ENCODE measurements at regions of chr4 and their contacts with region 1.

Region 1: DNA sequence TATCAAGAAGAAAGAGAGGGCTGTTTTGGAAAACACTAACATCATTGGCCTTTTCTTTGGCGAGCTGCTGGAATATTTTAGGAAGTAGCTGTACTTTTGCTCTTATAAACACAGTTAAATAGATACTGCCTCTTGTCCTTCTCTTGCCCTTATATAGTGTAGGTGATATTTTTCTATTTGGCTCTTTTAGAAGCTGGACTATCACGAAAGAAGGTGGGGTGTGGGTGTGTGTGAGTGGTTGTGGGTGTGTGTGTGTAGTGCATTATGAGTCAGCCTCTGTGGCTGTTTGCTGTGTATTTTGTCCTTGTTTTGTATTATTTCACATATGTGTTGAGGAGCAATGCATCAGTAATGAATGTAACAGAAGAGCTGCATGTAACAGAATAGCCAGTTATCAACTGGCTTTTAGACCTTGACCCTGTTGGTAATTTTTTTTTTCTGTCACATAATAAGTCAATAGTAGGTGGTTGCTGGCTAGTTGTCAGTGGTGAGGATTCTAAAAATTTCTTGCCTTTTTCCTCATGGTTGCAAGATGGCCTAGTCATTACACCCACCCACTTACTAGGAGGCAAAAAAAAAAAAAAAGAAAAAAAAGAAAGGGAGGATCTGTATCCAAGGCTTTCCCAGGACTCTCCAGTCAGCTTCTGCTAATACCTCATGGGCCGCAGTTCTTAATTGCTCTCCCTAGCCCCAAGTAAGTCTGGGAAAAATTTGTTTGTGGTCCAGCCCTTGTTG is 23.8 kb downstream of the ARHGAP10 start:
- DNase-seq: no peak
- ATAC-seq: peak; percentile 61
- H3K4me3 ChIP-seq: no peak overlapping the region
- H3K27ac ChIP-seq: peak overlapping the region; percentile 5 to 88
- H3K4me1 ChIP-seq: peaks cover 5 to 7% of the 10 kb centered on the region in 2 donors
- H3K27me3 ChIP-seq: no peaks in the 10 kb centered on the region

Region 2: DNA sequence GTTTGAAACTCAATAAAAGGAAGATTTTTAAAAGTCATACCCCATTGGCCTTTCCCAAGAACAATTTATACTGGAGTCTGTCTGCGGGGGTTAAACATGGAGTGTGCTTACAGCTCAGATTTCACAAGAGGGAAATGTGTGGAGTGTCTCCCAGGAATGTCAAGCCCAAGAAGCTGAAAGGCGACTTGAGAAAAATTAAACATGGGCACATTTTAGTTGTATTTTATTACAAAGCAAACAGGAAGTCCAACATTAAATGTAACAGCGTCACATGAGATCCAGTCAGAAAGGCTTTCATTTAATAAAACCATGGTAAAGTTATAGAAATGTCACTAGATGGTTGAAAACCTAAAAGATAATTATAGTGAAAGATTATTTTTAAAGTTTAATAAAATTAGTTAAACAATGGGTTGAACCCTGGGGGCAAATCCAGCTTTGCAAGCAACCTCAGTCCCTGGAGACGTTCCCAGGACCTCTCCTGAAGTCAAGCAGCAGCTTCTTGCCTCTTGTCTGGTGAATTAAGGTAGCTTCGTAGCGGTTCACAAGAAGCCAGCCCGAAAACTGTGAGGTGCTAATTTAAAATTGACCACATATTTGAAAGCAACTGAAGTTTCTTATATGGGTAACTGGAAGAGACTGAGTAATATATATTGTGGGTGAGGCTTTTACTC is 443.2 kb before region 1 on chr4:
- intact Hi-C with region 1: no loop called
- DNase-seq: no peak
- ATAC-seq: peak; percentile 50
- H3K4me3 ChIP-seq: no peak overlapping the region
- H3K27ac ChIP-seq: no peak overlapping the region
- H3K4me1 ChIP-seq: peaks cover 0 to 3% of the 10 kb centered on the region in 2 donors
- H3K27me3 ChIP-seq: no peaks in the 10 kb centered on the region

Region 3: GRCh38 chr4:147513952-147514351 is 241.8 kb before region 1 on chr4:
- intact Hi-C with region 1: no loop called
- DNase-seq: no peak
- ATAC-seq: no peak
- H3K4me3 ChIP-seq: no peak overlapping the region
- H3K27ac ChIP-seq: no peak overlapping the region
- H3K4me1 ChIP-seq: peaks cover 2 to 12% of the 10 kb centered on the region in 2 donors
- H3K27me3 ChIP-seq: no peaks in the 10 kb centered on the region

Region 4: DNA sequence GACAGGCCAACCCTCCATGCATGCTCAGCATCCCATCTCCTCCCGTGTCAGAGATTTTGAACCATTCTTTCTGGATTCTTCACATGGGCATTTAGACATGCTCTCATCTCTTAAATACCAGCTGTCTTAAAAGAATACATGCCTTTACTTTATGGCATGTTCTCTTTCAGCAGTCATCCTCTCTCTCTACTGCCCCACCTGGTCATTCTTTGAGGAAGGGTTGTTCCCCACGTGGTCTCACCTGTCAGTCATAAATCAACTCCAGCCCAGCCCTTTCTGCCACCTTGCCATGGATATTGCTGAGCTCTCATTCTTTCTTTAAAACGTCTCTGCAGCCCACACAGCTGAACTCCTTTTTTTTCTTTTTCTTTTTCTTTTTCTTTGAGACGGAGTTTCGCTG is 87.4 kb after region 1 on chr4:
- intact Hi-C with region 1: loop called in 1 of 2 experiments (anchors 5 kb)
- DNase-seq: no peak
- ATAC-seq: no peak
- H3K4me3 ChIP-seq: no peak overlapping the region
- H3K27ac ChIP-seq: no peak overlapping the region
- H3K4me1 ChIP-seq: peaks cover 4 to 10% of the 10 kb centered on the region in 2 donors
- H3K27me3 ChIP-seq: no peaks in the 10 kb centered on the region